Activated CD4-positive, alpha-beta T cell treated with anti-CD3 and anti-CD28 coated beads for 36 hours (primary cell): ENCODE measurements at regions of chr16 and their contacts with region 1.

Region 1: DNA sequence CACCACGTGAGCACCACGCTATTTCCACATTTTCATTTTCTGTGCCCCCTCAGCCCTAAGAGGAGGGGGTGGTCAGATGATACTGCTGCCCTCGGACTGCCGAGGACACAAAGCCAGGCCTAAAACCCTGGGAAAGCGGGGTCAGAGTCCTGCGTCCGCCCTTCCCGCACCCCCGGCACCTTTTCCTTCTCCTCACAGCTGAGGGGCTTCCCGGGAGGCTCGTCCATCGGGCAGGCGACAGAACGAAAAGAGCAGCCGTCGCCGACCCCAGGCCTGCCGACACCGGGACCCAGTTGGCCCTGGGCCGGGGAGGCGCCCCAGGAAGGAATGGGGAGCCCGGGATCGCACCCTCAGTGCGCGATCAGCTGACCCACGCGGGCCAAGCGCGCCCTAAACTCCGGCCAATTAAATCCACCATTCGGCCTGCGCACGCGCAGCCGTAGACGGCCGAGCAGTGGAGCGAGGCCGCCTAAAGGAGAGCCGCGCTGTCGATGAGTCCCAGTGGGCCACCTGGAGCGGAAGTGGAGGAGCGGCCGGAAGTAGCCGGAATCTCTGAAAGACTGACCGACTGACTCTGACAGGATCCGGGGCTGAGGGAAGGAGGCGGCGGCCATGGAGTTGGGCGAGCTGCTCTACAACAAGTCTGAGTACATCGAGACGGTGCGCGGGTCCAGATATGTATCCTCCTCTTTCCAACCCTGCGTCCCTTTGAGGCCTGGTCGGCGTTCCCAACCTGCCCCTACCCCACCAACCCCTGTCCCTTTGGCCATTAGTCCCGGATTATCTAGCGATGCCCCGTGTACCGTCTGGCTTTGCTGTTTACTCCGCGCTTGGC is at the starts of genes DCTN5 and PALB2:
- DNase-seq: peak; percentile 93
- ATAC-seq: peak; percentile 98
- H3K4me3 Mint-ChIP-seq: peak within 1 kb of the TSS; percentile 100
- H3K27ac Mint-ChIP-seq: peak within 1 kb of the TSS; percentile 96
- H3K4me1 Mint-ChIP-seq: peaks cover 34% of the 10 kb centered on the region
- H3K27me3 Mint-ChIP-seq: no peaks in the 10 kb centered on the region
- total RNA-seq, gene DCTN5: 47.1 to 55.8 TPM
- total RNA-seq, gene PALB2: 23.1 to 23.5 TPM

Region 2: DNA sequence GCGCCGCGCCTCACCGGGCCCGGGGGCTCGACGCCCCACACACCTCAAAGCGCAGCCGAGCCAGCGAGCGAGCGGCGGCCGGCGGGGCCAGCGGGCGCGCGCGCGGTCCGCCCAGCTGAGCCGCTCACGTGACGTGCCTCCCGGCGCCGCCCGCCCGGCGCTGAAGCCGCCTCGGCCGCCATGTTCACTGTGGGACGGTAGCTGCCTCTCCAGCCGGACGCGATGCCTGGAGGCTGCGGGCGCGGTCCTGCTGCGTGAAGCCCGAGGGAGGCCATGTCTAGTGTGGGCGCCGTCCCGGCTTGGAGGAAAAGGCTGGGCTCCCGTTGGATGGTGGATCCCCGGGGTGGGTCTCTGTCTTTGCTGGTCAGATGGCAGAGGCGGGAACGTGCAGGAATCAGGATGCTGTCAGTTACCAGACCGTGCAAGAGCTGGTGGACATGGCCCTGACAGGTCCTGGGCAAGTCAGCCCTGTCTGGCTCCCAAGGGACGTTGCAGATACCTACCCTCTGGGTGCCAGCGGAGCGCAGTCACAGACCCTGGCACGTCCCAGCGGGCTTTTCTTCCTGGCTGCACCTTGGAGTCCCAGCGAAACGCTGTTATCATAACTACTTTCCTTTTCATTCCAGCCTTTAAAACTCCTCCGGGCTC is 491.7 kb before region 1 on chr16 and contains the start of gene USP31:
- CTCF ChIA-PET with region 1: no interaction called
- POLR2A ChIA-PET with region 1: no interaction called
- intact Hi-C with region 1: loop called in 1 of 2 experiments (anchors 1 kb)
- DNase-seq: peak; percentile 94
- ATAC-seq: peak; percentile 99
- H3K4me3 Mint-ChIP-seq: peak within 1 kb of the TSS; percentile 86
- H3K27ac Mint-ChIP-seq: peak within 1 kb of the TSS; percentile 86
- H3K4me1 Mint-ChIP-seq: peaks cover 28% of the 10 kb centered on the region
- H3K27me3 Mint-ChIP-seq: no peaks in the 10 kb centered on the region
- total RNA-seq, gene USP31: 5.3 to 5.9 TPM

Region 3: GRCh38 chr16:23452572-23453337 is 188.4 kb before region 1 on chr16 and contains the start of gene COG7:
- CTCF ChIA-PET with region 1: no interaction called
- POLR2A ChIA-PET with region 1: no interaction called
- intact Hi-C with region 1: loop called in 1 of 2 experiments (anchors 2 kb)
- DNase-seq: peak; percentile 92
- ATAC-seq: peak; percentile 94
- H3K4me3 Mint-ChIP-seq: peak within 1 kb of the TSS; percentile 92
- H3K27ac Mint-ChIP-seq: peak within 1 kb of the TSS; percentile 93
- H3K4me1 Mint-ChIP-seq: peaks cover 20% of the 10 kb centered on the region
- H3K27me3 Mint-ChIP-seq: no peaks in the 10 kb centered on the region
- total RNA-seq, gene COG7: 18.1 to 19.9 TPM

Region 4: GRCh38 chr16:23510164-23510914 is 130.8 kb before region 1 on chr16 and contains the start of gene GGA2:
- CTCF ChIA-PET with region 1: no interaction called
- POLR2A ChIA-PET with region 1: no interaction called
- intact Hi-C with region 1: loop called in 1 of 2 experiments (anchors 1 kb)
- DNase-seq: peak; percentile 88
- ATAC-seq: peak; percentile 87
- H3K4me3 Mint-ChIP-seq: peak within 1 kb of the TSS; percentile 89
- H3K27ac Mint-ChIP-seq: peak within 1 kb of the TSS; percentile 78
- H3K4me1 Mint-ChIP-seq: peaks cover 48% of the 10 kb centered on the region
- H3K27me3 Mint-ChIP-seq: no peaks in the 10 kb centered on the region
- total RNA-seq, gene GGA2: 86.7 to 114 TPM

Region 5: DNA sequence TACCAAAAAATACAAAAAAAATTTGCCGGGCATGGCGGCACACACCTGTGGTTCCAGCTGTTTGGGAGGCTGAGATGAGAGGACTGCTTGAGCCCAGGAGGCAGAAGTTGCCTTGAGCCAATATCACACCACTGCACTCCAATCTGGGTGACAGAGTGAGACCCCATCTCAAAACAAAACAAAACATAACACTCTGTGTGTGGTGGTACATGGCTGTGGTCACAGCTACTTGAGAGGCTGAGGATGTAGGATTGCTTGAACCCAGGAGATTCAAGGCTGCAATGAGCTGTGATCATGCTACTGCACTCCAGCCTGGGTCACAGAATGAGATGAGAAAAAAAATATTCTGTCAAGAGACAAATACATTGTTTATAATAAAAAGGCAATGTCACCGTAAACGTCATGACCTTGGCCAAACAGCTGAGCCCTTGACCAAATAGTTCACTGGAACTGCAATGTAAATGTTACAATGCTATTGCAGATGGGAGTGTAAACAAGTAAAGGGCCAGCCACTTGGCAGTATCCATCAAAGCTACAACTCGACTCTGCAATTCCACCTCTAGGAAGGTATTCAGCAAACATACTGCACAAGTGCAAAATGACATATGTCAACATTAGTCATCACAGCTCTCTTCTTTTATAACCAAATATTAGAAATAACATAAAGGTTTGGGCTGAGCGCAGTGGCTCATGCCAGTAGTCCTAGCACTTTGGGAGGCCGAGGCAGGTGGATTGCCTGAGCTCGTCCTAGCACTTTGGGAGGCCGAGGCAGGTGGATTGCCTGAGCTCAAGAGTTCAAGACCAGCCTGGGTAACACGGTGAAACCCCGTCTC is 100.9 kb before region 1 on chr16:
- CTCF ChIA-PET with region 1: no interaction called
- POLR2A ChIA-PET with region 1: interaction called, 10 read pairs
- intact Hi-C with region 1: no loop called
- DNase-seq: no peak
- ATAC-seq: no peak
- H3K4me3 Mint-ChIP-seq: no peak overlapping the region
- H3K27ac Mint-ChIP-seq: no peak overlapping the region
- H3K4me1 Mint-ChIP-seq: peaks cover 10% of the 10 kb centered on the region
- H3K27me3 Mint-ChIP-seq: no peaks in the 10 kb centered on the region

Region 6: GRCh38 chr16:23670137-23670776 is 29.1 kb after region 1 on chr16:
- CTCF ChIA-PET with region 1: interaction called, 3 read pairs
- POLR2A ChIA-PET with region 1: no interaction called
- intact Hi-C with region 1: loop called in 1 of 2 experiments (anchors 2 kb)
- DNase-seq: peak; percentile 84
- ATAC-seq: peak; percentile 98
- H3K4me3 Mint-ChIP-seq: no peak overlapping the region
- H3K27ac Mint-ChIP-seq: peak overlapping the region; percentile 16
- H3K4me1 Mint-ChIP-seq: peaks cover 20% of the 10 kb centered on the region
- H3K27me3 Mint-ChIP-seq: no peaks in the 10 kb centered on the region

Region 7: DNA sequence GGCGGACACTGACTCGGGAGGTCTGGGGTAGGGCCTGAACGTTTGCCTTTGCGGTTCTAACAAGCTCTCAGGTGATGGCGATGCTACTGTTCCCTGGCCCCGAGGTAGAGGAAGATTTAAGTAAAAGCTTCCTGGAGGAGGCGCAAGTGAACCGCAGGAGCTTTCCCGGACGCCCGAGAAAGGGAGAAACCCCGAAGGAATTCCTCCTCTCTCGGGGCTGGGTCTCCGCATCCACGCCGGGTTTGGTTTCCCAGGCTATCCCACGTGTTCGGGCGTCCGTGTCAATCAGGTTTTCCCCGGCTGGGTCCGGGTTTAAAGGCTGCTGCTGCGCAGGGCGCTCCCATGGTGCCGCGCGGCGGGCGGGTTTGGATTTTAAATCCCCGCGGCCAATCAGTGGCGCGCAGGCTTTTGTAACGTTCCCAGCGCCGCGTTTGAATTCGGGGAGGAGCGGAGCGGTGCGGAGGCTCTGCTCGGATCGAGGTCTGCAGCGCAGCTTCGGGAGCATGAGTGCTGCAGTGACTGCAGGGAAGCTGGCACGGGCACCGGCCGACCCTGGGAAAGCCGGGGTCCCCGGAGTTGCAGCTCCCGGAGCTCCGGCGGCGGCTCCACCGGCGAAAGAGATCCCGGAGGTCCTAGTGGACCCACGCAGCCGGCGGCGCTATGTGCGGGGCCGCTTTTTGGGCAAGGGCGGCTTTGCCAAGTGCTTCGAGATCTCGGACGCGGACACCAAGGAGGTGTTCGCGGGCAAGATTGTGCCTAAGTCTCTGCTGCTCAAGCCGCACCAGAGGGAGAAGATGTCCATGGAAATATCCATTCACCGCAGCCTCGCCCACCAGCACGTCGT is 37.5 kb after region 1 on chr16 and contains the start of gene PLK1:
- CTCF ChIA-PET with region 1: interaction called, 7 read pairs
- POLR2A ChIA-PET with region 1: interaction called, 7 read pairs
- intact Hi-C with region 1: loop called (anchors 1 to 2 kb)
- DNase-seq: peak; percentile 93
- ATAC-seq: peak; percentile 97
- H3K4me3 Mint-ChIP-seq: peak within 1 kb of the TSS; percentile 95
- H3K27ac Mint-ChIP-seq: peak within 1 kb of the TSS; percentile 60
- H3K4me1 Mint-ChIP-seq: peaks cover 16% of the 10 kb centered on the region
- H3K27me3 Mint-ChIP-seq: no peaks in the 10 kb centered on the region
- total RNA-seq, gene PLK1: 91.4 to 120 TPM

Region 8: GRCh38 chr16:23694644-23695373 is 53.7 kb after region 1 on chr16:
- CTCF ChIA-PET with region 1: no interaction called
- POLR2A ChIA-PET with region 1: no interaction called
- intact Hi-C with region 1: no loop called
- DNase-seq: peak; percentile 12
- ATAC-seq: peak; percentile 30
- H3K4me3 Mint-ChIP-seq: no peak overlapping the region
- H3K27ac Mint-ChIP-seq: no peak overlapping the region
- H3K4me1 Mint-ChIP-seq: peaks cover 7% of the 10 kb centered on the region
- H3K27me3 Mint-ChIP-seq: no peaks in the 10 kb centered on the region

Region 9: GRCh38 chr16:23712976-23713375 is 71.8 kb after region 1 on chr16 and contains the start of gene ERN2:
- CTCF ChIA-PET with region 1: no interaction called
- POLR2A ChIA-PET with region 1: no interaction called
- intact Hi-C with region 1: no loop called
- DNase-seq: no peak
- ATAC-seq: no peak
- H3K4me3 Mint-ChIP-seq: no peak within 1 kb of the TSS
- H3K27ac Mint-ChIP-seq: no peak within 1 kb of the TSS
- H3K4me1 Mint-ChIP-seq: no peaks in the 10 kb centered on the region
- H3K27me3 Mint-ChIP-seq: peaks cover 34% of the 10 kb centered on the region
- total RNA-seq, gene ERN2: not detected

Region 10: GRCh38 chr16:23952128-23952970 is 311.2 kb after region 1 on chr16:
- CTCF ChIA-PET with region 1: no interaction called
- POLR2A ChIA-PET with region 1: no interaction called
- intact Hi-C with region 1: no loop called
- DNase-seq: peak; percentile 67
- ATAC-seq: peak; percentile 75
- H3K4me3 Mint-ChIP-seq: peak overlapping the region; percentile 13
- H3K27ac Mint-ChIP-seq: peak overlapping the region; percentile 84
- H3K4me1 Mint-ChIP-seq: peaks cover 82% of the 10 kb centered on the region
- H3K27me3 Mint-ChIP-seq: no peaks in the 10 kb centered on the region